Heart left ventricle (tissue), 16 donors: ENCODE measurements at regions of chr6 and their contacts with region 1.

Region 1: DNA sequence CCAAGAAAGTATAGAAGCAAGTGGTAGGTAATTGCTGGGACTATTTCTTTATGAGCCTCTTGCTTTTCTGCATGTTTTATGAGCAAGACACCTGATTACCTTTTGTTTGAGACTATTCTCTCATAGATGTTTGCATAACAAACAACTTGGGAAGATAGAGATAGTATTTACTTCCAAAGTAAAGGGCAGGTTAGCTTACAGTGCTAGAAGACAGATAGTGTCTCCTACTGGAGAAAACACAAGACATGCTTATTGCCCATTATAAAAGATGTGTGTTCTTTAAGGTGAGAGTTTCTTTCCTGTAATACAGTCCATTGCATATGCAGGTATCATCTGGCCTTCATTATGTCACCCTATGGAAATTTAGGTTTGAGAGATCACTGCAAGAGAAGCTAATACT is 174.2 kb upstream of the FUT9 start:
- DNase-seq: no peak
- ATAC-seq: no peak
- H3K4me3 ChIP-seq: no peak overlapping the region
- H3K27ac ChIP-seq: no peak overlapping the region
- H3K4me1 ChIP-seq: no peaks in the 10 kb centered on the region
- H3K27me3 ChIP-seq: no peaks in the 10 kb centered on the region
- CTCF ChIP-seq: no peak
- POLR2A ChIP-seq: no peak

Region 2: DNA sequence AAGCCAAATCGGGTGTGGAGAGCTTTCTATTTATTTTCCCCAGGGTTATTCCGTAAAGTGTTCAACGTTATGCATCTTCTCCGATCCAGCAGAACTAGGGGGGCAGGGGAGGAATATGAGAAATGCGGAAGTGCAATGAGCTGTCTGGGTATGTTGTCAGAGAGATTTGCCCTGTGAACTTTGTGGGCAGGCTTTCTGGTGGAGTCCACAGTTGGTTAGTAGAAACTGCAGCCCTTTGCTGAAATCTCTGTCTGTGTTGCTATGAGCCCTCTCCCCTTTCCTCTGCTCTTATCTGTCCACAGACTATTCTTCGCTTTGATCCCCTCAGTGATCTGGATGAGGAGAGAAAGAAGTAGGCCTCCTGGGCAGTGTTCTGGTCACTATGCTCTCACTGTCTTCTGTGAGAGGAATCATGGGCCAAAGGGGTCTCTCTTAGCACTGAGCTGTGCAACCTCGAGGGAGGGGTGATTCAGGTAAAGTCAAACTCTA is 15.4 kb after region 1 on chr6:
- intact Hi-C with region 1: loop called in 1 of 10 experiments (anchors 1 kb)
- DNase-seq: no peak
- ATAC-seq: no peak
- H3K4me3 ChIP-seq: no peak overlapping the region
- H3K27ac ChIP-seq: no peak overlapping the region
- H3K4me1 ChIP-seq: no peaks in the 10 kb centered on the region
- H3K27me3 ChIP-seq: no peaks in the 10 kb centered on the region
- CTCF ChIP-seq: no peak
- POLR2A ChIP-seq: no peak